Astrocyte of the cerebellum (primary cell): ENCODE measurements at regions of chr21 and their contacts with region 1.

Region 1: DNA sequence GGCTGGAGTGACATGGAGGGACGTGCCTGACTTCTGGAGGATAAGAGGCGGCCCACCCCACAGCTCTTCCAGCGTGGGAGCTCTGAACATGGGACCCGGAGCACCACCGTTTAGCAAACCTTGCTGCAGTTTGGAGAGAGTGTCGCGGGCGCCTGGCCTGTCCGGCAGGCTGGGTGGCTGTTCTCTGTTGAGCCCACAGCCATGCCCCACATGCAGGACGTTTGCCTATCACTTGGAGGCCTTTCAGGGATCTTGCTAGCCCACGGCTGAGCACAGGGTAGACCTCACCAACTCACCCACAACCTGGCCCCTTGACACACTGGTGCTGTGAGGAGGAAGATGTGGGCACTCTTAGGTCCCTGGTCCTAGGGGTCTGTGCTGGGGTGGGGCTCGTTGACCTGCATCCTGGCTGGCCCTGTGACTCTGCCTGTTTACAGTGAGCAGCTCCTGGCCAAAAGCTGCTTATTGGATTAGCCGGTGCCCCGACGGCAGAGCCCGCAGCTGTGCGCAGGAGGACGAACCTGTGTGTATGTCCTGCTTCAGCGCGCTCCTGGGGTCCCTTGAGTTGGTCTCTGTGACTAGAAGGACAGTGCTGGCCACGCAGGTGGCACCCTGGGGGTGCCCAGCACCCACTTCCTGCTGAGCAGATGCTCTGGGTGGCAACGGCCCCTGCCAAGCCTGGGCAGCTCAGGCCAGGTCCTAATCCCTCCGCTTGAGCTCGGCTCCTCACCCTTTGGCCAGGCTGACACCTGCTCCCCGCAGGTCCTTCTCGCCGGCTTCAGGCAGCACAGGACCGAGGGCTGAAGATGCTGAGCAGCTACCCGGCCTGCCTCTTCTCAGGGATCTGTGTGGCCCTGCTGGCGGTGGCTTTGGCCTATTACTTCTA is 72.4 kb upstream of the TRAPPC10 start:
- DNase-seq: no peak
- H3K4me3 ChIP-seq: no peak overlapping the region
- CTCF ChIP-seq: no peak

Region 2: GRCh38 chr21:43864313-43864961 is 75.2 kb before region 1 on chr21:
- in situ Hi-C with region 1: no loop called
- DNase-seq: no peak
- H3K4me3 ChIP-seq: peak overlapping the region; percentile 63
- CTCF ChIP-seq: no peak

Region 3: GRCh38 chr21:43909741-43910486 is 29.8 kb before region 1 on chr21:
- in situ Hi-C with region 1: loop called (anchors 5 kb)
- DNase-seq: no peak
- H3K4me3 ChIP-seq: no peak overlapping the region
- CTCF ChIP-seq: no peak